ENCODE measurements at regions of chr2 and their contacts with region 1.

Region 1: DNA sequence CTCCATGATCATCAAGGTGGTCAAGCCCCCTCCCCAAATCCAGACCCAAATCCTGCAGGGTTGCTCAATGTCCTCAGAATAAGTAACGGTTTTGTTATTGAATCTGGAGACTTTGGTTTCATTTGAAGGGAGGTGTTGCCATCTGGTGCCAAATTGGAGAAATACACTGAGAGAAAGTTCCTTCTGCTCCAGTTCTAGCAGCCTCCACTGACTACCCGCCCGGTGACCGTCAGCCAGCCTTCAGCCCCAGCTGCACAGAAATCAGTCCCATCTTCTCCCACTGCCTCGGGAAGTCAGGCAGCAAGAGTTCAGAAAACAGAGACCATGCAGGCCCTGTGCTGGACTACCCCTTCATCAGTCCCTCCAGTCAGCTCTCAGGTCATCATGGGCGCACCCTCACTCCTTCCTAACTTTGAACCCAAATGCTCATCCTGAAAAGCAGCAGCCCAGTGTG is 38.7 kb downstream of the PKDCC start:
- DNase-seq: peak; percentile 59
- H3K4me3 Mint-ChIP-seq: no peak overlapping the region
- H3K27ac Mint-ChIP-seq: no peak overlapping the region
- H3K4me1 Mint-ChIP-seq: peaks cover 4% of the 10 kb centered on the region
- H3K27me3 Mint-ChIP-seq: no peaks in the 10 kb centered on the region

Region 2: DNA sequence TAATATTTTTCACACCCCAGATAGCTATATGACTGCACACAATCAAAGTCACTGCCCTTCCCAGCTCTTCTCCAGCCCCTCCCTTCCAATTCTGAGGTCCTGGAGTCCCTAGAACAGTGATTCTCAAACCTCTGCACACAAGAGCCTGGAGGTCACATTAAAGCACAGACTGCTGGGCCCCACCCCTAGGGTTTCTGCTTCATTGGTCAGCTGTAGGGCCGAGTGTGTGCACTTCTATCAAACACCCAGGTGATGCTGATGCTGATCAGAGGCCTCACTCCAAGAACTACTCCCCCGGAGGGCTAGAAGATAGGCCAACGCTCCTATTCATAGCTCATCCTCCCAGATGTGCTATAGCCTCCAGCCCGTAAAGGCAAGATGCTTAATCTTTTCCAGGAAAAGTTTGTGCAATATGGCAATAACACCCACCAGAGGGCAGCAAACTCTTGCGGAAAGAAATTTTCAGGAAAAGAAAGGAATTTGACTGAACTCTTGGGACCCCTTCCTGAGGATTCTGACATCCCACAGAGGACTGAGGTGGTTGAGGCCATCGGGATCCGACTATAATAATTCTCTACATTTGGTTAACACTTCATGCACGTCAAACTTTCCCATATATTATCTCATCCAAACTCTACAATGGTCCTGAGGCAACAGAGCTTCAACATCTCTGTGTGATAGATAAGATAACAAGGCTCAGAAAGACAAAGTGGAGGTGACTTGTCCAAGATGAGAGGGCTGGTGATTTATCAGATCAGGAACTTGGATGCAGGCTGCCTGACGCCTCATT is 232.9 kb before region 1 on chr2:
- CTCF ChIA-PET with region 1: interaction called, 94 read pairs
- intact Hi-C with region 1: loop called (anchors 1 kb)
- DNase-seq: peak; percentile 27
- H3K4me3 Mint-ChIP-seq: no peak overlapping the region
- H3K27ac Mint-ChIP-seq: no peak overlapping the region
- H3K4me1 Mint-ChIP-seq: peaks cover 17% of the 10 kb centered on the region
- H3K27me3 Mint-ChIP-seq: peaks cover 16% of the 10 kb centered on the region

Region 3: DNA sequence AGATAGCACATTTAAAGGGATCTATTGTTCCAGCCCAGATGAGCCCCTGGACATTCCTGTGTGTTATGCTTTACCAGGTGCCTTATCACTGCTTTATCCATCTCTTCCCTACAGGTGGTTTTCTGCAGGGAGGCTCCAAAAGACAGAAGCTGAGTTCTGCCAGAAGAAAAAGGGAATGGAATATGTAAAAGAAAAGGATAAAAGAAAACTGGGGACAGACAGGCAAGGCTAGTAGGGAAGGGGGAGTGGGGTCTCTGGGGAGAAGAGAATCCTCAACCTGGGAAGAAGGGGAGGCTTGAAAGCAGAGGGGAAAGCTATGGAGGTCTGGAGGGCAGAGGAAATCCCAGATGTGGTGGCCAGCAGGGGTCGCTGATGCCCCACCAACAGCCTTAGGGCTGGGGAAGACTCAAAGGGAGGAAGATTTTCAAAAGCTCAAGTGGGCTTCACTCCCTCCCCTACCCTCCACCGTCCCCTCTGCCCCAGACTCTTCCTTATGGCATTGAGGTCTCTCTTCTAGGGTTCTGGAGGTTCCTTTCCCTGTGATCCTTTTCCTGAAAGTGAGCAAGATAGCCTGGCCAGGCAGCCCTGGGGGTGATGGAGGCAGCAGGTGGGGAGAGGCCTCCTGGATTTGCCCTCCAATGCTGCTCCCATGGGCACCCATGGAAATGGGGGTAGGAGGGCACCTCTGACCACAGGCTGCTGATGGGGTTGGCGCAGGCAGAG is 216.8 kb before region 1 on chr2:
- CTCF ChIA-PET with region 1: interaction called, 291 read pairs
- intact Hi-C with region 1: loop called (anchors 1 kb)
- DNase-seq: peak; percentile 81
- H3K4me3 Mint-ChIP-seq: no peak overlapping the region
- H3K27ac Mint-ChIP-seq: no peak overlapping the region
- H3K4me1 Mint-ChIP-seq: no peaks in the 10 kb centered on the region
- H3K27me3 Mint-ChIP-seq: no peaks in the 10 kb centered on the region

Region 4: GRCh38 chr2:42328148-42328833 is 241.8 kb after region 1 on chr2:
- CTCF ChIA-PET with region 1: interaction called, 12 read pairs
- intact Hi-C with region 1: no loop called
- DNase-seq: no peak
- H3K4me3 Mint-ChIP-seq: no peak overlapping the region
- H3K27ac Mint-ChIP-seq: peak overlapping the region; percentile 50
- H3K4me1 Mint-ChIP-seq: peaks cover 18% of the 10 kb centered on the region
- H3K27me3 Mint-ChIP-seq: no peaks in the 10 kb centered on the region